Naive thymus-derived CD4-positive, alpha-beta T cell (primary cell): ENCODE measurements at regions of chr19 and their contacts with region 1.

Region 1: DNA sequence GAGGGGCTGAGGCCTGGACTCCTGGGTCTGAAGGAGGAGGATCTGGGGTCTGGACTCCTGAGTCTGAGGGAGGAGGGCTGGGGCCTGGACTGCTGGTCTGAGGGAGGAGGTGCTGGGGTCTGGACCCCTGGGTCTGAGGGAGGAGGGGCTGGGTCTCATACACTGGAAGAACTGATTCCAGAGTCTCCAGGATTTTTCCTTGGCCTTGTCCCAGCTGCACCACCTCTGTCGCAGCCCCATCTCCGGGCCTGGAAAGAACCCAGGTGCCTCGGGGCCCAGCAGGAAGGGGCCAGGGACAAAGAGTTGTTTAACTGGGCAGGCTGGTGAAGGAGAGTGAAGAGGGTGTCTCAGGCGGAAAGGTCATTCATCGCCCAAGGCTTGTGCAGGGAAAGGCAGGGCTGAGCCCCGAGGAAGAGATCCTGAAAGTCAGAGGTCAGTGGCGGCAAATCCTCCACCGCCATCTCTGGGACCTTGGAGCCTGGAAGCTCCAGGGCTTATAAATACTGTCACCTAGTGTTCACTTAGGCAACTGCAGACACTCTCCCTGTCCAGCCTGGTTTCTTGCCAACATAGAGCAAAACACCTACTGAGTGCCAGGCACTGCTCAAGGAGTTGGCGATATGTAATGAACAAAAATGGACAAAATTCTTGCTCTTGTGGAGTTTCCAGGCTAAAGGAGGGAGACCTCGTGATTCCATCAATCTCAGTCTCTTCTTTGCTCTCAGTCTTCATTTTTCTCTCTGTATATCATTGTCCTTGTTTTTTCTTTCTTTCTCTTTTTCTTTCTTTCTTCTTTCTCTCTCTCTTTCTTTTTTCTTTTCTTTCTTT is 4.4 kb upstream of the KCNN4 start:
- DNase-seq: peak in 8 of 9 donors; percentile 29 to 68 (median 56)
- ATAC-seq: peak; percentile 75
- H3K4me3 ChIP-seq: peak overlapping the region; percentile 12
- H3K4me3 Mint-ChIP-seq: peak overlapping the region; percentile 43 to 85 (median 70)
- H3K27ac ChIP-seq: peak overlapping the region; percentile 72
- H3K27ac Mint-ChIP-seq: peak overlapping the region; percentile 87 to 98 (median 95)
- H3K4me1 ChIP-seq: peaks cover 21 to 30% of the 10 kb centered on the region in 2 donors
- H3K4me1 Mint-ChIP-seq: peaks cover 27 to 49% (median 40%) of the 10 kb centered on the region in 7 donors
- H3K27me3 ChIP-seq: no peaks in the 10 kb centered on the region
- H3K27me3 Mint-ChIP-seq: peaks cover 0 to 6% (median 6%) of the 10 kb centered on the region in 5 donors

Region 2: DNA sequence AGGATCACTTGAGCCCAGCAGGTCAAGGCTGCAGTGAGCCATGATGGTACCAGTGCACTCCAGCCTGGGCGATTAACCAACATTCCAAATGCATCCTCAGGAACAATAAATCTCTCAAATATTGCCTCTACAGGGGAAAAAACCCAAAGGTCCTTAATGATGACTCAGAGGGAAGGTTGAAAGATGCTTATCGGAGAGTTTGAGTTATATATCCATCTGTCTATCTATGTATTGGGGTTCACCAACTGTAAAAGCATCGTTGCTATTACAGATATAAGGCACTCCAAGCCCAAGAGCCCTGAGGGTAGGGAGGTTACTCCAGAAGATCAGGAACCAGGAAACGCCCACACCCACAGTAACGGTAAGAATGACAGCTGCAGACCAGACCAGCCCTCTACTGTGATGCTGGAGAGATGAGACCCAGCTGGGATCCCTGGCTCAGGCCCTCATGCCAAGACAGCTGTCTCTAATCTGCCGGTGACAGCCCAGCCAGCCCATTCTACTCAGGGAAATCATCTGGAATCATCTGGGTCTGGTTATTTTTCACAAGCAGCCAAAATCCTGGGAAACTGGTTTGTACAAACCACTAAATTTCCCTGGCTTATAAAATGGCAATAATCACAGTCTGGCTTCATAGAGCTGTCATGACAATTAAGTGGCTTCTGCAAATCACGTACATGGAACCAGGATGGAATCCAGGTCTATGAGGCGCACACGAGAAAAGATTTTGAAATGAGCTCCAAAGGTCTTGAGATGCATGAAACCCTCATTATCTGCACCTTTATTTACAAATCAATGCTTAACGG is 346.7 kb before region 1 on chr19:
- CTCF ChIA-PET with region 1: no interaction called
- POLR2A ChIA-PET with region 1: no interaction called
- intact Hi-C with region 1: loop called in 1 of 2 experiments (anchors 10 kb)
- DNase-seq: peak in 2 of 9 donors; percentile 19 to 21
- ATAC-seq: peak; percentile 4
- H3K4me3 ChIP-seq: peak overlapping the region; percentile 33
- H3K4me3 Mint-ChIP-seq: peak overlapping the region; percentile 49 to 77 (median 64)
- H3K27ac ChIP-seq: peak overlapping the region; percentile 72
- H3K27ac Mint-ChIP-seq: peak overlapping the region; percentile 81 to 99 (median 93)
- H3K4me1 ChIP-seq: peaks cover 23 to 30% of the 10 kb centered on the region in 2 donors
- H3K4me1 Mint-ChIP-seq: peaks cover 29 to 75% (median 62%) of the 10 kb centered on the region in 7 donors
- H3K27me3 ChIP-seq: no peaks in the 10 kb centered on the region
- H3K27me3 Mint-ChIP-seq: peaks cover 0 to 2% (median 0%) of the 10 kb centered on the region in 5 donors

Region 3: DNA sequence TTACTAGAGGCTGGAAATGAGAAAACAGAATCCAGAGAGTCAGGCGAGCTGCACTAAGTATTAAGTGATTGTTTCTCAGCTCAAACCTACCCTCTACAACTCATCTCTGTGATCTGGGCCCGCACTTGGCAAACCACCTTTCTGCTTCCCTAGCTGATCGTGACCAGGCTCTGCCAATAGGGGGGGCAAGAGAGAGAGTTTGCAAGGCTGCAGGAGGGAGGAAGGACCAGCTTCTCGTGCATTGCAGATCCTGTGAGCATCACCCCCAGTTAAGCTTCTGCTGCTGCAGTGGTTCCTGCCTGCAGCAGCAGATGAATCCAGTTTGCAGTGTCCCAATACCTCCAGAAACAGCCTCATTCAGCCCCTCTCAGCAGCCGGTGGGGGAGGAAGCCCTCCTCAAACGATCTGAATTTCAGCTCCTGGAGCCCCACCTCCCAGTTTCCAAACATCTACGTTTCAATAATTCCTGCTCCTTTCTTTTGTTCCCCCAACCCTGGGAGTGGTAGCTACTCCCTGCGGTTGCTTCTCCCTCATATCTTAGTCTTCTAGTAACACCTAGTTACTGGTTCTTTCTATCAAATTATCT is 229.9 kb before region 1 on chr19:
- CTCF ChIA-PET with region 1: no interaction called
- POLR2A ChIA-PET with region 1: no interaction called
- intact Hi-C with region 1: loop called in 1 of 2 experiments (anchors 1 kb)
- DNase-seq: peak; percentile 59 to 90 (median 84)
- ATAC-seq: peak; percentile 98
- H3K4me3 ChIP-seq: no peak overlapping the region
- H3K4me3 Mint-ChIP-seq: no peak overlapping the region
- H3K27ac ChIP-seq: peak overlapping the region; percentile 1
- H3K27ac Mint-ChIP-seq: peak overlapping the region; percentile 44 to 89 (median 58)
- H3K4me1 ChIP-seq: peaks cover 3 to 10% of the 10 kb centered on the region in 2 donors
- H3K4me1 Mint-ChIP-seq: peaks cover 11 to 32% (median 23%) of the 10 kb centered on the region in 7 donors
- H3K27me3 ChIP-seq: no peaks in the 10 kb centered on the region
- H3K27me3 Mint-ChIP-seq: no peaks in the 10 kb centered on the region

Region 4: DNA sequence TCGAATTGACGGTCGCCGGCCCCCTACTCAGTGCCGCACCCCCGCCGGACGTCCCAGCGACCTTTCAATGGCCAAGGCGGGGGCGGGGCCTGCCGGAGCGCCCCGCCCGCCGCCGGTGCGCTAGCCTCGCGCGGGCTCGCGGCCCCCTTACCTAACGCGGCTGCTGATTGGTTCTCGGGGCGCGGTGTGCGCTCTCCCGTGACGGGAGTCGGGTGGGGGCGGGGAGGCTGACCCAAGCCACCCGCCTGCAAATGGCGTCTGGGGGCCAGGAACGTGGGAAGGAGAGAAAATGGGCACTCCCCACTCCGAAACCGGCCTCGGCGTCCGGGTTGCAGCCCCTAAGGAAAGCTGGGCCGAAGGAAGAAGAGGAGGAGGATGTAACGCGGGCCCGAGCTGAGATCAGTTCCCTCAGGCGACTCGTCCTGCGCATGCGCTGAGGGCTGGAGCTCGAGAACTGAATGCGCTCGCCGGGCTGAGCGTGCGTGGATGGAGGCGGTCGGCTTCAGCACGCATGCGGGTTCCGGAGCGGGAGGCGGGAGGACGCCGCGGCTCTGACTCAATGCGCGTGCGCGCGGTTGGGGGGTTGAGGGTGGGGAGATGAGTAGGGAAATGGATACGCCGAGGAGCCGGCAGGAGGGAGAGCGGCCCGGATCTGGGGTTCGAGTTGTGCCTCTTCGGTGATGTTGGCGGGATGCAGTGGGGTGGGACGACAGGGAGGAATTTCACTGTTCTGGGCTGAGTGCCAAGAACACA is 30.5 kb before region 1 on chr19 and contains the start of gene SMG9:
- CTCF ChIA-PET with region 1: interaction called, 3 read pairs
- POLR2A ChIA-PET with region 1: interaction called, 28 read pairs
- intact Hi-C with region 1: loop called (anchors 1 to 2 kb)
- DNase-seq: peak; percentile 98 to 100 (median 99)
- ATAC-seq: peak; percentile 92
- H3K4me3 ChIP-seq: peak within 1 kb of the TSS; percentile 95
- H3K4me3 Mint-ChIP-seq: peak within 1 kb of the TSS; percentile 94 to 99 (median 97)
- H3K27ac ChIP-seq: peak within 1 kb of the TSS; percentile 85
- H3K27ac Mint-ChIP-seq: peak within 1 kb of the TSS; percentile 96 to 100 (median 98)
- H3K4me1 ChIP-seq: peaks cover 20 to 27% of the 10 kb centered on the region in 2 donors
- H3K4me1 Mint-ChIP-seq: peaks cover 5 to 62% (median 45%) of the 10 kb centered on the region in 7 donors
- H3K27me3 ChIP-seq: no peaks in the 10 kb centered on the region
- H3K27me3 Mint-ChIP-seq: peaks cover 0 to 6% (median 0%) of the 10 kb centered on the region in 5 donors
- total RNA-seq, gene SMG9: 48.5 to 75.9 (median 53.9) TPM

Region 5: DNA sequence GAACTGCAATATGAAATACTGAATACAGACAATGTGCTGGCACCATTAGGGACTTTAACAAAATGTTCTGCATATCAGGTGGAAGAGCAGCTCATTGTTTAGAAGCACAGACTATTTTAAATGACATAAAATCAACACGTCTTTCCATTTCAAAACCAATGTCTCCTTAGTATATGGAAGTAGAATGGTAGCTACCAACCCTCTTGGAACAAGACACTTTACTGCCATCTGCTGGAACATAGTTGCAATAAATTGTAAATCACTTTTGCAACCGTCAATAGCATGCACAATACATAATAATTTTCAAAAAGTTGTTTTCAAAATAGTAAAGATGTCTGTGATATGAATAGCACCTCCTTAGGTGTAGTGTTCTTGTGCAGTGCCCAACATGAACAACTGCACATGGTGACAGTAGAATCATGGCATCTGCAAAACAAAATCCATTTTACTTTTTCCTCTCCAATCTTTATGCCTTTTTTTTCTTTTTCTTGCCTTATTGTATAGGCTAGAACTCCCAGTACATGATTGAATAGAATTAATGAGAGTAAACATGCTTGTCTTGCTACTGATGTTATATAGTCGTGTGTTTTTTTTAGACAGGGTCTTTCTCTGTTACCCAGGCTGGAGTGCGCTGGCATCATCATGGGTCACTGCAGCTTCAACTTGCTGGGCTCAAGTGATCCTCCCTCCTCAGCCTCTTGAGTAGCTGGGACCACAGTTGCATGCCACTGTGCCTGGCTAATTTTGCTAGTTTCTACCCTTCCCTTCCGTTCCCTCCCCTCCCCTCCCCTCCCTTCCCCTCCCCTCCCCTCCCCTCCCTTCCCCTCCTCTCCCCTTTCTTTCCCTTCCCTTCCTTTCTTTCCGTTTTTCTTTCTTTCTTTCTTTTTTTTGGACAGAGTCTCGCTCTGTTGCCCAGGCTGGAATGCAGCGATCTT is 24.8 kb after region 1 on chr19:
- CTCF ChIA-PET with region 1: interaction called, 3 read pairs
- POLR2A ChIA-PET with region 1: no interaction called
- intact Hi-C with region 1: loop called in 1 of 2 experiments (anchors 2 kb)
- DNase-seq: peak in 7 of 9 donors; percentile 14 to 59 (median 49)
- ATAC-seq: peak; percentile 75
- H3K4me3 ChIP-seq: no peak overlapping the region
- H3K4me3 Mint-ChIP-seq: no peak overlapping the region
- H3K27ac ChIP-seq: no peak overlapping the region
- H3K27ac Mint-ChIP-seq: no peak overlapping the region
- H3K4me1 ChIP-seq: no peaks in the 10 kb centered on the region
- H3K4me1 Mint-ChIP-seq: peaks cover 0 to 3% (median 0%) of the 10 kb centered on the region in 7 donors
- H3K27me3 ChIP-seq: no peaks in the 10 kb centered on the region
- H3K27me3 Mint-ChIP-seq: peaks cover 12 to 27% (median 17%) of the 10 kb centered on the region in 5 donors